B cell (primary cell): ENCODE measurements at regions of chr4 and their contacts with region 1.

Region 1: DNA sequence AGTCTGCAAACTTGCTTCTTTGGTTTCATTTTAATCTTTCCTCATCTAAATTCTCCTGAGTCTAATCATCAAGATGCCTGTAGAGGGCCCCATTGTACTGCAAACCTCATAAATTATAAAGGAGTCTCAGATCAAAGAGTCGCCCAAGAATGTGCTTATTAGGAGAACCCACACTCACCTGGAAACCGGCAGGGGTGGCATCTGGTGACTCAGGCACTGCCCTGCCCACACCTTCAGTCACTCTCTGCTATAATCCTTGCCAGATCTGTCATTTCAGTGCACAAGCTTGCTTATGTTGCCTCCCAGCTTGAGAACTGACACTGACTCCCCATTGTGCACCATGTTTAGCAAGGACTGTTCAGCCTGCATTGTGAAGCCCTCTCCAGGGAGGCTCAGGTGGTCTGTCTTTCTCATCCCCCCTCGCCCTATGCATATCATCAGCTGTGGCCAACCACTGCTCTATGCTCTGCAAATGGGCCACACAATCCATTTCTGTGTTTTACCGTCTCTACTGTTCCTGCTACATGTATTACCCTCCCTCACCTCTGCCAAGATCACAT is 12.4 kb downstream of the EPGN start:
- DNase-seq: peak; percentile 31
- ATAC-seq: peak; percentile 24
- H3K4me3 ChIP-seq: no peak overlapping the region
- H3K4me3 Mint-ChIP-seq: no peak overlapping the region
- H3K27ac ChIP-seq: no peak overlapping the region
- H3K27ac Mint-ChIP-seq: no peak overlapping the region
- H3K4me1 ChIP-seq: no peaks in the 10 kb centered on the region
- H3K4me1 Mint-ChIP-seq: no peaks in the 10 kb centered on the region
- H3K27me3 ChIP-seq: peaks cover 0 to 10% (median 4%) of the 10 kb centered on the region in 4 experiments
- H3K27me3 Mint-ChIP-seq: peaks cover 26% of the 10 kb centered on the region
- CTCF ChIP-seq: peak; percentile 31

Region 2: DNA sequence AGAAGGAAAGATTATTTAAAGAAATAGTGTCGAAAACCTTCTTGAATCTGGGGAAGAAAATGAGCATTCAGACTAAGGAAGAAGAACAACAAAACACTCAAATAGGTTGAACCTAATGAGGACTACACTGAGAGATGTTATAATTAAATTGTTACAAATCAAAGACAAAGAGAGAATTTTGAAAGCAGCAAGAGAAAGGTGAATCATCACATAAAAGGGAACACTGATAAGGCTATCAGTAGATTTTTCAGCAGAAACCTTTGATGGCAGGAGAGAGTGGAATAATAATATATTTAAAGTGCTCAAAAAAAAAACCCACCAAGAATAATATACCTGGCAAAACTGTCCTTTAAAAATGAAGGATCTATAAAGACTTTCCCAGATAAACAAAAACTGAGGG is 239.2 kb after region 1 on chr4:
- CTCF ChIA-PET with region 1: no interaction called
- POLR2A ChIA-PET with region 1: no interaction called
- intact Hi-C with region 1: no loop called
- DNase-seq: no peak
- ATAC-seq: no peak
- H3K4me3 ChIP-seq: no peak overlapping the region
- H3K4me3 Mint-ChIP-seq: no peak overlapping the region
- H3K27ac ChIP-seq: no peak overlapping the region
- H3K27ac Mint-ChIP-seq: no peak overlapping the region
- H3K4me1 ChIP-seq: no peaks in the 10 kb centered on the region
- H3K4me1 Mint-ChIP-seq: no peaks in the 10 kb centered on the region
- H3K27me3 ChIP-seq: no peaks in the 10 kb centered on the region
- H3K27me3 Mint-ChIP-seq: no peaks in the 10 kb centered on the region
- CTCF ChIP-seq: no peak

Region 3: GRCh38 chr4:74675673-74676279 is 355.1 kb after region 1 on chr4:
- CTCF ChIA-PET with region 1: interaction called, 5 read pairs
- POLR2A ChIA-PET with region 1: no interaction called
- intact Hi-C with region 1: loop called (anchors 1 kb)
- DNase-seq: peak; percentile 44
- ATAC-seq: peak; percentile 56
- H3K4me3 ChIP-seq: no peak overlapping the region
- H3K4me3 Mint-ChIP-seq: no peak overlapping the region
- H3K27ac ChIP-seq: no peak overlapping the region
- H3K27ac Mint-ChIP-seq: no peak overlapping the region
- H3K4me1 ChIP-seq: no peaks in the 10 kb centered on the region
- H3K4me1 Mint-ChIP-seq: peaks cover 3% of the 10 kb centered on the region
- H3K27me3 ChIP-seq: no peaks in the 10 kb centered on the region
- H3K27me3 Mint-ChIP-seq: peaks cover 31% of the 10 kb centered on the region
- CTCF ChIP-seq: peak; percentile 79

Region 4: DNA sequence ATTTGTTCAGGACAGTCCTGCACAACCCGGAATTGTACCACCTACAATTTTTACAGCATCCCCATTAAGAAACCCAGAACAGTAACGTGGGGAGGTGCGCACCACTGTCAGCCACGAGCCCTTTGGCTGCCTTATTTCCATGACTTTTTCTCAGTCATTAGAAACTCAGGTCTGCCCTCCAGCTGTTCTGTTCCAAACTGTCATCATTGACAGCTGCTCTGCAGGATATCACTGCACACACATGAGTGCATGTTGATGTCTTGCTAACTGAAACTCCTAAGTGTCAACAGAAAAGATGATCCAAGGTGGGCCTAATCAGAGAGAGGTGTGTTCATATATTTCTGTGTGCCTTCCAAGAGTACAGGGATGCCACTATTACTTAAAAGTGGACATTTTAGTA is 735.6 kb after region 1 on chr4:
- CTCF ChIA-PET with region 1: no interaction called
- POLR2A ChIA-PET with region 1: no interaction called
- intact Hi-C with region 1: no loop called
- DNase-seq: no peak
- ATAC-seq: no peak
- H3K4me3 ChIP-seq: no peak overlapping the region
- H3K4me3 Mint-ChIP-seq: no peak overlapping the region
- H3K27ac ChIP-seq: no peak overlapping the region
- H3K27ac Mint-ChIP-seq: no peak overlapping the region
- H3K4me1 ChIP-seq: no peaks in the 10 kb centered on the region
- H3K4me1 Mint-ChIP-seq: no peaks in the 10 kb centered on the region
- H3K27me3 ChIP-seq: no peaks in the 10 kb centered on the region
- H3K27me3 Mint-ChIP-seq: no peaks in the 10 kb centered on the region
- CTCF ChIP-seq: no peak